ENCODE measurements at regions of chr10 and their contacts with region 1.

Region 1: GRCh38 chr10:80509403-80510161 is 28.1 kb upstream of the SH2D4B start:
- DNase-seq: peak in 1 of 10 donors; percentile 81

Region 2: GRCh38 chr10:80382989-80383388 is 126.6 kb before region 1 on chr10:
- intact Hi-C with region 1: loop called (anchors 5 kb)
- DNase-seq: peak in 6 of 10 donors; percentile 12 to 71 (median 30)

Region 3: DNA sequence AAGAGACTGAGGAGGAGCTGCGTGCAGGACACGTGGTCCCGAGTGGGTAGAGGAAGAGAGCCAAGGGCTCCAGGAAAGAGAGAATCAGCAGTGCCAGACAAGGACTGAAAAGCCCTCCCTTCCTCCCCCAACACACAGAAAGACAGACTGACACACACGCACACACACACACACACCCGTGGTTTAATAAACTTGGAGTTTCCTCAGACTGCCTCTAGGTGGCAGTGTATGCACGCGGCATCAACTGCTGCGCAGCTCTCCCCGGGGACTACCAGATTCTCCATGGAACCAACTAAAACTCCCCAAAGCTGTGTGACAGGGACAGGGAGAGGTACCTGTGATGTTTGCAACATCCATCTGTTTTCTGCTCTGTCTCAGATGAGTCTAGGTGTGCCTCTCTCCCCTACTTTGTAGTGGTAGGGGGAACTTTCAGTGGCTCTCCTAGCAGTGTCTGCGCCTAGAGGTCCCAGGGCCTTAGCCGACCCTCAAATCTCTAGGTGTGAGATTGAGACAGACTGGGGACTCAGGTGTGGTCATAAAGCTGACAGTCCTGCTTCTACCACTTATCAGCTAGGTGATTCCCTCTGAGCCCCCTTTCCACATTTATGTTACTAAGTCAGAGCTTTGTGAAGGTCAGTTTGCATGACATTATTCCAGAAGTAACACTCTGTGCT is 64.8 kb before region 1 on chr10:
- intact Hi-C with region 1: loop called (anchors 1 kb)
- DNase-seq: peak; percentile 47 to 96 (median 70)

Measured in posterior cingulate gyrus (tissue), 11 donors.